Tibial artery (tissue), 4 donors: ENCODE measurements at regions of chr14 and their contacts with region 1.

Region 1: DNA sequence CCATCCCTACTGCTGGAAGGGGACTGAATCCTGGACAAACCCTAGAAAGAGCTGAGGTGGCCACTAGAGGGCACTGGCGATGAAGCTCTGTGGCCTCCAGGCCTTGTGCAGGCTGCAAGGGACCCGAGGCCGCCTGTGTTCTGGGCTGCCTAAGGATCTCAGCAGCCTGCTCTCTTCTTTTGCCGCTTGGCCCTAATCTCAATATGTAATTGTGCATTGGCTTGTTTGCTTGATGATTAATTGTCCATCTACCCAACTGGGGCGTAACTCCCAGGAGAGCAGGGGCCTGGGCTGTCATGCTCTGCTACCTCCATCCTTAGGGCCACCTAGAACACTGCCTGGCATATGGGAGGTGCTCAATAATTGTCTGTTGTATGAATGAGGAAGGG is 73.8 kb downstream of the SYNE3 start:
- DNase-seq: peak; percentile 81 to 89
- H3K4me3 ChIP-seq: no peak overlapping the region
- H3K27ac ChIP-seq: no peak overlapping the region
- H3K4me1 ChIP-seq: peaks cover 0 to 5% (median 0%) of the 10 kb centered on the region in 4 donors
- H3K27me3 ChIP-seq: no peaks in the 10 kb centered on the region
- CTCF ChIP-seq: peak; percentile 84 to 89

Region 2: GRCh38 chr14:95527387-95528002 is 84.9 kb after region 1 on chr14:
- intact Hi-C with region 1: loop called (anchors 2 kb)
- DNase-seq: peak in 1 of 2 donors; percentile 85
- H3K4me3 ChIP-seq: peak overlapping the region in 1 of 2 donors; percentile 19
- H3K27ac ChIP-seq: peak overlapping the region; percentile 61 to 77
- H3K4me1 ChIP-seq: peaks cover 3 to 64% (median 43%) of the 10 kb centered on the region in 4 donors
- H3K27me3 ChIP-seq: no peaks in the 10 kb centered on the region
- CTCF ChIP-seq: peak; percentile 79 to 90

Region 3: GRCh38 chr14:96176811-96177603 is 734.4 kb after region 1 on chr14:
- intact Hi-C with region 1: no loop called
- DNase-seq: peak in 1 of 2 donors; percentile 59
- H3K4me3 ChIP-seq: no peak overlapping the region
- H3K27ac ChIP-seq: no peak overlapping the region
- H3K4me1 ChIP-seq: peaks cover 0 to 3% (median 0%) of the 10 kb centered on the region in 4 donors
- H3K27me3 ChIP-seq: peaks cover 0 to 29% of the 10 kb centered on the region in 2 donors
- CTCF ChIP-seq: no peak